Posterior vena cava (tissue), 2 donors: ENCODE measurements at regions of chr17 and their contacts with region 1.

Region 1: GRCh38 chr17:65556014-65556909 is 5.2 kb downstream of the AXIN2 start:
- DNase-seq: peak; percentile 93

Region 2: DNA sequence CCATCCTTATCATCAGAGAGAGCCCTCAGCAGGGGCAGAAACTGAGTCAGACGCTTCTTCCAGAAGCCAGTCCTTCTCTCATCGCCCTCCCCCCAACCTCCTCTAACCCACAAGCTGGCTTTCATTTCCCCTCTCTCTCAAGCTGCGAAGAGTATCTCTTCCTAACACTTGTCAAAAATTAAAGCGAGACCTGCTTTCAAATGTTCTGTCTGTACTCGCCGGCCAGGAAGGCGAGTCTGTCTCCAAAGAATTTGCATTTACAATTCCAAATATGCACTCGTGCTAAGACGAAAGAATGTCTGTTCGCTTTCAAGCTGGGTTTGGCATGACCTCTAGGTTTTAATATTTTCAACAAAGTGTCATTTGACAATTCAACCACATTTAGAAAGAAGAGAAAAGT is 278.7 kb before region 1 on chr17:
- intact Hi-C with region 1: no loop called
- DNase-seq: no peak

Region 3: DNA sequence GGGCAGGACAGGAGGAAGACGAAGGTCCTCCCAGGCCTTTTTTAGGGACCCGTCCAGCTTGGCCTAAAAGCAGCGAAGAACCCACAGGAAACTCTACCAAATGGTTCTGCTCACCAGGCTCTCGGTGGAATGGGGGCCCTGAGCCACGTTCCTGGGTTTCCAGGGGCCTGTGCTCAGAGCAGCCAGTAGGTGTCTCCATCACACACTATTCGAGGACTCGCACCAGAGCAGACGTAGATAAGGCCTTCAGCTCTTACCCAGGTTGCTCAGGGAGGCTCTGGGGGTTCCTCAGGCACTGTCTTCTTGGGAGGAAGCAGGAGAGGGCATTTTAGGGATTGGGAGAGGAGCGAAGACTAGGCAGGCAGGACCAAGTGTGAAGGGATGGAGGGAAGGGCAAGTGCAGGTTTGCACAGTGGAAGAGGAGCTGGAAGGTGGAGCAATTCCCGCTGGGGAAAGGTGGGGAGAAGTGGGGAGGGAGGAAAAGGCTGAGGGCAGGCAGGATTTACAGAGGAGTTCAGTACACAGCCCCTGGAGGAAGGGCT is 262.0 kb before region 1 on chr17:
- intact Hi-C with region 1: loop called (anchors 10 kb)
- DNase-seq: no peak

Region 4: GRCh38 chr17:65467156-65467555 is 89.1 kb before region 1 on chr17:
- intact Hi-C with region 1: loop called in 1 of 2 experiments (anchors 5 kb)
- DNase-seq: no peak

Region 5: DNA sequence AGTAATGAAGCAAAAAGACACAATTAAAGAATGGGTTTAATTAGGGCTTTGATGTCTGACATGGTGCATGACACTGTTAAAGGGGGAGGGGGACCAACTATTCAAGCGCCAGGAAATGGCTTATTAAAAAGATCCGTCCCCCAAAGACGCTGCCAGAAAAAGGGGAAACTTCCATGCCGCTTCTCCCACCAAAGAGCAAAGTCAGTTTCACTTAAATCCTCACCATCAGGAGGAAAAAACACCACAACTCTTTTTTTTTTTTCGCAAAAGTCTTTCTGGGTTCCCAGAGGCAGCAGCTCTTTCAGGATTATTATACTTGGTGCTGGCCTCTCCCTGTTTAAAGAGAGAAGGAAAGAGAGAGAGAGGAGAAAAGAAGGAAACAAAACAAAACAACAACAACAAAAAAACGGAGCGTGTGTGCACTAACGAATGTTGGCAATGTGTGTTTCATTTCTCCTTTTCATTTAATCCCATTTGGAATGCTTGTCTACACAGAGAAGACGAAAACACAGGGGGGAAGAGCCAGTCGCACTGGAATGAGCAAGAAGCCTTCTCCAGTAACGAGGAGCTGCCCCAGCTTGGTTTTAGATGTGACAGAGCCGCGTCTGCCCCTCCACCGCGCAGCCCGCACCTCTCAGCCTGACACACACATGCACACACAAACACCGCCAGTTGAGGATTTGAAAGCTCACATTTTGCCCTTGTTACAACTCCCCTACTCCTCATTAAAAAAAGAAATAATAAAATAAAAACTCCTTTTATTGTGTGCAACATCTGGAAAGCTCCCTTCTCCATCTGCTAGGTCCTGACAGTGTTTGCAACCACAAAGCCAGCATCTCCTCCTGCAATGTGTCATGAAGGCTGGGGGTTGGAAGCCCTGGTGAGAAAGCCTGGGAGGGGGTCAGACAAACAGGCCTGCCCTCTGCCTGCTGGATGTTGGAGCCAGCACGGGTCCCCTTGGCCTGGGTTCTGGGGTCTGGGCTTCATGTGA is 37.9 kb after region 1 on chr17:
- intact Hi-C with region 1: no loop called
- DNase-seq: no peak

Region 6: DNA sequence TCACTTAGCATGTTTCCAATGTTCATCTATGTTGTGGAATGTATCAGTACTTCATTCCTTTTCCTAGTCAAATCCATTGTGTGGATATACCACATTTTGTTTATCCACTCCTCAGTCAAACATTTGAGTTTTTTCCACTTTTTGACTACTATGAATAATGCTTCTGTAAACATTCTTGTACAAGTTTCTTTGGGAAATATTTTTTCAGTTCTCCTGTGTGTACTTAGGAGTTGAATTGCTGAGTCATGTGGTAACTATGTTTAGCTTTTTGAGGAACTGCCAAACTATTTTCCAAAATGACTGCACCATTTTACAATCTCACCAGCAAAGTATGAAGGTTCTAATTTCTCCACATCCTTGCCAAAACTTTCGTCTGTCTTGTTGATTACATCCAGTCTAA is 228.8 kb after region 1 on chr17:
- intact Hi-C with region 1: loop called in 1 of 2 experiments (anchors 10 kb)
- DNase-seq: no peak